Kidney (tissue), 22 donors: ENCODE measurements at regions of chr12 and their contacts with region 1.

Region 1: GRCh38 chr12:57459055-57459749 is 383 bp upstream of the GLI1 start:
- DNase-seq: peak; percentile 96 to 98 (median 97)
- H3K4me3 ChIP-seq: peak overlapping the region; percentile 85 to 93 (median 87)
- H3K27ac ChIP-seq: peak overlapping the region; percentile 79 to 84
- H3K4me1 ChIP-seq: peaks cover 0 to 13% (median 6%) of the 10 kb centered on the region in 3 donors
- H3K27me3 ChIP-seq: no peaks in the 10 kb centered on the region
- CTCF ChIP-seq: peak; percentile 99

Region 2: DNA sequence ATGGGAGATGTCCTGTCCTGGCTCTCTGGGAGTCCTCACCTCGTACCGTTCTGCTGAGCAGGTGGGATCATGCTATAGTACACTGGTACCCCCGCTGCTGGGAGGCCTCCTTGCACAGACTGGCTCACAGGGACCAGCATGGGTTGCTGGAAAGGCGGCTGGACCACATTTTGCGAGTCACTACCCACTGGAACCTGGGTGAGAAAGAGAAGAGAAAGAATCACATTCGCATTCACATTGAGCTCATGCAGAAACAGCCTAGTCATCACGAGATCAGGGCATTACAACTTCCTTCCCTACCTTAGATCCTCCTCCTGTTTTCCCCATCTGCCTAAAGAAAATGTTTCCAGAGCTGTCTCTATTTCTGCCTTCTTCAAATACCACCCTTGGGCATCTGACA is 190.9 kb before region 1 on chr12:
- intact Hi-C with region 1: loop called (anchors 10 kb)
- DNase-seq: no peak
- H3K4me3 ChIP-seq: no peak overlapping the region
- H3K27ac ChIP-seq: no peak overlapping the region
- H3K4me1 ChIP-seq: no peaks in the 10 kb centered on the region
- H3K27me3 ChIP-seq: no peaks in the 10 kb centered on the region
- CTCF ChIP-seq: no peak